ENCODE measurements at regions of chr10 and their contacts with region 1.

Region 1: GRCh38 chr10:987870-988666 is at the start of gene GTPBP4:
- DNase-seq: peak; percentile 98
- H3K4me3 Mint-ChIP-seq: peak within 1 kb of the TSS; percentile 93
- H3K27ac Mint-ChIP-seq: peak within 1 kb of the TSS; percentile 92
- H3K4me1 Mint-ChIP-seq: peaks cover 34% of the 10 kb centered on the region
- H3K27me3 Mint-ChIP-seq: no peaks in the 10 kb centered on the region
- total RNA-seq, gene GTPBP4: 107 TPM

Region 2: GRCh38 chr10:931416-932318 is 56.4 kb before region 1 on chr10 and contains the start of gene LARP4B:
- CTCF ChIA-PET with region 1: interaction called, 3 read pairs
- POLR2A ChIA-PET with region 1: interaction called, 6 read pairs
- intact Hi-C with region 1: loop called (anchors 1 kb)
- DNase-seq: peak; percentile 98
- H3K4me3 Mint-ChIP-seq: peak within 1 kb of the TSS; percentile 88
- H3K27ac Mint-ChIP-seq: peak within 1 kb of the TSS; percentile 87
- H3K4me1 Mint-ChIP-seq: peaks cover 35% of the 10 kb centered on the region
- H3K27me3 Mint-ChIP-seq: no peaks in the 10 kb centered on the region
- total RNA-seq, gene LARP4B: 92.1 to 95.0 TPM

Region 3: DNA sequence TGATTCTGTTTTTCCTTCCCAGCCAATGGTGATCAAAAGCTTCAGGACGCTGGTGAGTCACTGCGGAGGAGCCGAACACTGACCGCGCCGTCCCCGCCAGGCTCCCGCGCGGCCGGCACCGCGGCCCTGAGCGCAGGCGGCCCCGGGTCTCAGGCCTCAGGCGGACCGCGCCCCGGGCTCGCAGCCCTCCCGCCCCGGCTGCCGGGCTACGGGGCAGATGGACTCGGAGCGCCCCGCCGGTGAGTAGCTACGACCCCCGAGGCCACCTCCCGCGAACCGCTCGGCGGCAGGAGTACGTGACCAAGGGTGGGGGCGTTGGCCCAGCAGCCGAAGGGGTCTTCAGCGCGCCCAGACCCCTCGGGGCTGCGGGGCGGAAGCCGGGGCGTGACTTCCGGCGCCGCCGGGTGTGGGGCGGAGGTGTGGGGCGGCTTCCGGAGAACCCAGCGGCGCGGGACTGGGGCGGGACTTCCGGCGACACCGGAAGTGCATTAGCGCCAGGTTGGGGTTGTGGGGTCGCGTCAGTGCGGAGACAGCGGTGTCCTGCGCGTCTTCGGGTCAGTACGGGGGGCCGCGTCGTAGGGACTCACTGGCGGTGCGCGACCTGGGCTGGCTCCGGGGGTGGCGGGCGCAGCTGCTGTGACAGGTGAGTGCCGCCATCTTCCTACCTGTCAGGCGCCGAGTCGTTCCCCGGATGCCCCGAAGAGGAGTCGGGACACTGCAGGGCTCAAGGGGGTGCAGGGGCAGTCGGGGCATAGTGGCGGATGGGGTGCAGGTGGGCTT is 68.4 kb after region 1 on chr10 and contains the start of gene WDR37:
- CTCF ChIA-PET with region 1: interaction called, 4 read pairs
- POLR2A ChIA-PET with region 1: interaction called, 11 read pairs
- intact Hi-C with region 1: no loop called
- DNase-seq: peak; percentile 90
- H3K4me3 Mint-ChIP-seq: peak within 1 kb of the TSS; percentile 92
- H3K27ac Mint-ChIP-seq: peak within 1 kb of the TSS; percentile 93
- H3K4me1 Mint-ChIP-seq: peaks cover 82% of the 10 kb centered on the region
- H3K27me3 Mint-ChIP-seq: no peaks in the 10 kb centered on the region
- total RNA-seq, gene WDR37: 18.1 to 19.4 TPM

Region 4: DNA sequence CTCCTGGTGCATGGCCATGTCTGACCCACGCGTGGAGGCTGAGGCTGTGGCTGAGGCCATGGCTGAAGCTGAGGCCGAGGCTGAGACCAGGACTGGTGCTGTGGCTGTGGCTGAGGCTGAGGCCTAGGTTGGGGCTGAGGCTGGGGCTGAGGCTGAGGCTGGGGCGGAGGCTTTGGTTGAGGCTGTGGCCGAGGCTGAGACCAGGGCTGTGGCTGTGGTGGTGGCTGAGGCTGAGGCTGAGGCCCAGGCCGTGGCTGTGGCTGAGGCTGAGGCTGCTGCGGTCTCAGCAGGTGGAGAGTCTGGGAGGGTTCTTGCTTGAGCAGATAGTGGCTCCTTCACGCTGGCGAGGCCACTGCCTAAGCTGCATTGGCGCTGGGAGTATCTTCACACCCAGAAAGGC is 144.5 kb after region 1 on chr10:
- CTCF ChIA-PET with region 1: no interaction called
- POLR2A ChIA-PET with region 1: no interaction called
- intact Hi-C with region 1: no loop called
- DNase-seq: no peak
- H3K4me3 Mint-ChIP-seq: no peak overlapping the region
- H3K27ac Mint-ChIP-seq: no peak overlapping the region
- H3K4me1 Mint-ChIP-seq: peaks cover 6% of the 10 kb centered on the region
- H3K27me3 Mint-ChIP-seq: no peaks in the 10 kb centered on the region

Measured in activated CD4-positive, alpha-beta memory T cell treated with anti-CD3 and anti-CD28 coated beads for 36 hours (primary cell).